CD8-positive, alpha-beta T cell (primary cell): ENCODE measurements at regions of chr10 and their contacts with region 1.

Region 1: DNA sequence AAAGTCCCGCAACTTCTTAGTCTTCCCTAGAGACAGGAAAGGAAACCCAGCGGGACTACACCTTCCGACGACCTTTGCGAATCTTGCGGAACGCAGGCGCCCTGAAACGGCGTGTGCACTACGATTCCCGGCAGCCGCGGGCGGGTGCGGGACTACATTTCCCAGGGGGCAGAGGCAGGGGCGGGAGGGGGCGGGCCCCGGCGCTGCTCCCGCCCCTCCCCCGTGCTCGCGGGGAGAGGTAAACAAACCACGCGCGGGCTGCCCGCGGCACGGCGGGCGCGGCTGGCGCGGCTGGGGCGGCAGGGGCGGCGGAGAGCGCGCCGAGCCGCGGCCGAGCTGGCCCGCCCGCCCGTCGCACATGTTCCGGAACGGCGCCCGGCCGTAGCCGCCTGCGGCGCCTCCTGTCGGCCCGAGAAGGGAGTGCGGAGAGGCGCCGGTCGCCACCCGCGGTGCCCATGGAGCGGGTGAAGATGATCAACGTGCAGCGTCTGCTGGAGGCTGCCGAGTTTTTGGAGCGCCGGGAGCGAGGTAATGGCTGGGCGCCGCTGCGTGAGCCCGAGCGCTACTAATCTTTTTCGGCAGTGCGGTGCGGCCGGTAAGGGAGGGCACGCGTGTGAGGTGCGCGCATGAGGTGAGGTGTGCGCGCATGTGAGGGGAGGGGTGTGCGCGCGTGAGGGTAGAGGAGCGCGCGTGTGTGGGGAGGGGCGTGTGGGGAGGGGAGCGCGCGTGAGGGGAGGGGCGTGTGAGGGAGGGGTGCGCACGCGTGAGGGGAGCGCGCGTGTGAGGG is 18.5 kb downstream of the MXI1 start:
- DNase-seq: peak; percentile 79 to 95 (median 88)
- ATAC-seq: peak; percentile 54
- H3K4me3 ChIP-seq: peak overlapping the region; percentile 88 to 91
- H3K4me3 Mint-ChIP-seq: peak overlapping the region; percentile 95
- H3K27ac ChIP-seq: peak overlapping the region; percentile 78 to 79
- H3K27ac Mint-ChIP-seq: peak overlapping the region; percentile 94
- H3K4me1 ChIP-seq: peaks cover 22% of the 10 kb centered on the region
- H3K4me1 Mint-ChIP-seq: peaks cover 34% of the 10 kb centered on the region
- H3K27me3 ChIP-seq: peaks cover 0 to 2% of the 10 kb centered on the region in 2 experiments
- H3K27me3 Mint-ChIP-seq: peaks cover 9% of the 10 kb centered on the region
- CTCF ChIP-seq: peak; percentile 50

Region 2: DNA sequence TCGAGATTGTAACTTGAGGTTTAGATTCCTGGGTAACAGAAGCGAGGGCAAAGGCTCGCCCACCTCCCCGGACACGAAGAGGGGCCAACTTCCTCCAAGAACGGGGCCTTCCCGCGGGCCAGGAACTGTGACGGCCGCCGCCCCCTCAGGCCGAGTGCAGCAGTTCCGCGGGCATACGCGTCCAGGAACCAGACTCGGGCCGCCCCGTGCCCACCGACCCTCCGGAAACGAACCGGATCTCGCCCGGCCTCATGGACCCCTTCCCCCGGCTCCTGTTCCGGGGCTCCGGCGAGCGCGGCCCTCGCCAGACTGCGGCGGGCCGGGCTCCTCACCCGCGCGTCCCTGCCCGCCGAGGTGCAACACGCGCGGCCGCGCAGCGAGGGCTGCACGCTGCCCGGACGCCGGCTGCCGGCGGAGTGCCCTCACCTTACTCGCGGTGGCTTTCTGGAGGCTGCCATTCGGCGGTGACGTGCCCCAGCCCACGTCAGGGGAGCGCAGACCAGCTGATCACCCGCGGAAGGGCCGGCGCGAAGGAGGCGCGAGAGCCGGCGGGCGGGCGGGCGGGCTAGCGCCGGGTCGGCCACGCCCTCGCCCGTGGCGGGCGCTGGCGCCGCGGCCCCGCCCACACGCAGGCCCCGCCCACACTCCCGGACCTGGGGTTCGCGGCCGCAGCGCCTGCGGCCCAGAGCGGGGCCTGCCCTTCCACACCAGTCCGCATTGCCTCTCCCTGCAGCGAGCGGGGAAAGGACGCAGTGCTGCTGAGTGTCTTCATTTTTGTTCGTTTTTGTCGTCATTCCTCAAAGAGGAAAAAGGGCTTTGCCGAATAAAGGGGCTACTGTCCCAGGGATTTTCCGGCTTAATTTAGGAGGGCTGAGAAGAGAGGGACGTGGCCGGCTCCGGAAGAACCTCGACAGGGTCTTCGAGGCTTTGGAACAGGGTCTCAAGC is 302.7 kb before region 1 on chr10 and contains the start of gene XPNPEP1:
- CTCF ChIA-PET with region 1: no interaction called
- POLR2A ChIA-PET with region 1: no interaction called
- intact Hi-C with region 1: loop called in 1 of 2 experiments (anchors 5 kb)
- DNase-seq: peak; percentile 55 to 93 (median 78)
- ATAC-seq: peak; percentile 90
- H3K4me3 ChIP-seq: peak within 1 kb of the TSS; percentile 75 to 80
- H3K4me3 Mint-ChIP-seq: peak within 1 kb of the TSS; percentile 87
- H3K27ac ChIP-seq: peak within 1 kb of the TSS; percentile 76 to 91
- H3K27ac Mint-ChIP-seq: peak within 1 kb of the TSS; percentile 92
- H3K4me1 ChIP-seq: peaks cover 37% of the 10 kb centered on the region
- H3K4me1 Mint-ChIP-seq: peaks cover 52% of the 10 kb centered on the region
- H3K27me3 ChIP-seq: no peaks in the 10 kb centered on the region
- H3K27me3 Mint-ChIP-seq: no peaks in the 10 kb centered on the region
- CTCF ChIP-seq: no peak
- total RNA-seq, gene XPNPEP1: 50.4 to 54.7 TPM

Region 3: GRCh38 chr10:110158051-110159005 is 67.6 kb before region 1 on chr10:
- CTCF ChIA-PET with region 1: interaction called, 5 read pairs
- POLR2A ChIA-PET with region 1: no interaction called
- intact Hi-C with region 1: loop called in 1 of 2 experiments (anchors 5 kb)
- DNase-seq: peak in 1 of 9 experiments; percentile 43
- ATAC-seq: no peak
- H3K4me3 ChIP-seq: no peak overlapping the region
- H3K4me3 Mint-ChIP-seq: no peak overlapping the region
- H3K27ac ChIP-seq: no peak overlapping the region
- H3K27ac Mint-ChIP-seq: no peak overlapping the region
- H3K4me1 ChIP-seq: peaks cover 24% of the 10 kb centered on the region
- H3K4me1 Mint-ChIP-seq: peaks cover 27% of the 10 kb centered on the region
- H3K27me3 ChIP-seq: peaks cover 43 to 59% of the 10 kb centered on the region in 2 experiments
- H3K27me3 Mint-ChIP-seq: peaks cover 79% of the 10 kb centered on the region
- CTCF ChIP-seq: no peak

Region 4: DNA sequence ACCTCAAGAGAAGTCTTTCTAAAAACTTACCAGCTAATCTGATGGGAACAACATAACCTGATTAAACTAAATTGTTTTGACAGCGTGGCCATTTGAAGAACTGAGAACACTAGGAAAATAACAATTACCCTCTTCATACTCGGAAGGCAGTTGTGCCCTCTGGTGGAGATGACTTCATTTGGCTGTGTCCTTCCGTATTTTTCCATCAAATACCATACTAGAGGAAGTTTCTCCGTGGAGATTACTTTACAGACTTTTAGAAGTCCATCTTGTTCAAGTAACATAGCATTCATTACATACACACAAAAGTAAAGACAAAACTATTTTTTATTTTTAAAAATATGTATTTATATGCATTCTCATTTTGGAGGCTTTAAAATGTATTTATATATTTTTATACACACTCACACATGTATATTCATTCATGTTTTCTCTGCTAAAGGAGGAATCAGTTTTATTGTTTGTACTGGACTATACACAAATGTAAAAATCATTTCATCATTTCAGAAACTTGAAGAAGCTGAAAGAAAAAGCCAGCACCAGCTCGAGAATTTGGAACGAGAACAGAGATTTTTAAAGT is 53.5 kb after region 1 on chr10:
- CTCF ChIA-PET with region 1: interaction called, 3 read pairs
- POLR2A ChIA-PET with region 1: no interaction called
- intact Hi-C with region 1: loop called (anchors 2 kb)
- DNase-seq: peak in 8 of 9 experiments; percentile 6 to 76 (median 44)
- ATAC-seq: peak; percentile 81
- H3K4me3 ChIP-seq: no peak overlapping the region
- H3K4me3 Mint-ChIP-seq: no peak overlapping the region
- H3K27ac ChIP-seq: no peak overlapping the region
- H3K27ac Mint-ChIP-seq: no peak overlapping the region
- H3K4me1 ChIP-seq: peaks cover under 1% of the 10 kb centered on the region
- H3K4me1 Mint-ChIP-seq: peaks cover 15% of the 10 kb centered on the region
- H3K27me3 ChIP-seq: no peaks in the 10 kb centered on the region
- H3K27me3 Mint-ChIP-seq: no peaks in the 10 kb centered on the region
- CTCF ChIP-seq: peak; percentile 77

Region 5: DNA sequence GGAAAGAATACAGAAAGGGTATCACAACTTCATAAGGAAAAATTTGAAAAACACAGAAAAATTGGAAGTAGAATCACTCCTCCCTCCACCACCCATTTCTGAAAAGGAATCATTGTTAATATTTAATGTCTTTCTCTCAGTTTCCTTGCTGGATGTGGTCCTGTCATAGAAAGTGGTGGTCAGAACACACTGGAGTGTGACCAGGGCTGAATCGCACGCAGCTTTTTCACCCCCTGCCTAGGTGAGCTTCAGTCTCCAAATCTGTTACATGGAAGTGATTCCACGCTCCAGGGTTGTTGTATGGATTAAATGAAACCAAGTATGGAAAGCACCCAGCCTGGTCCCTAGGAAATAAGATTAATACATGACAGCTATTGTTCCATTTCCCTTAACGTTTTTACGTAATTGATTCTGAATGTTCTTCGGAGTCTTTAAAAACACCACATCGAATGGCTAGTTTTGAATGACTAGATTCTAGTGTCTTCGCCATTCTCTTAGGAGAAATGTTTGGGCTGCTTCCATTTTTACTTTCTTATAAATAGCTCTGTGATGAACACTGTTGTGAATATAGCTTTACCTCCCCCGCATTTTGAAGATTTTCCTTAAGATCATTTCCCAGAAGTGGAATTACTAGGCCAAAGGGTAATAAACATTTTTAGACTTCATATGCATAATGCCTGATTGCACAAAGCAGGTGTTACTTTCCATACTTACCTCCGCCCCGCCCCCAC is 260.9 kb after region 1 on chr10:
- CTCF ChIA-PET with region 1: no interaction called
- POLR2A ChIA-PET with region 1: no interaction called
- intact Hi-C with region 1: no loop called
- DNase-seq: no peak
- ATAC-seq: no peak
- H3K4me3 ChIP-seq: no peak overlapping the region
- H3K4me3 Mint-ChIP-seq: no peak overlapping the region
- H3K27ac ChIP-seq: no peak overlapping the region
- H3K27ac Mint-ChIP-seq: no peak overlapping the region
- H3K4me1 ChIP-seq: no peaks in the 10 kb centered on the region
- H3K4me1 Mint-ChIP-seq: peaks cover 5% of the 10 kb centered on the region
- H3K27me3 ChIP-seq: no peaks in the 10 kb centered on the region
- H3K27me3 Mint-ChIP-seq: peaks cover 17% of the 10 kb centered on the region
- CTCF ChIP-seq: no peak

Region 6: DNA sequence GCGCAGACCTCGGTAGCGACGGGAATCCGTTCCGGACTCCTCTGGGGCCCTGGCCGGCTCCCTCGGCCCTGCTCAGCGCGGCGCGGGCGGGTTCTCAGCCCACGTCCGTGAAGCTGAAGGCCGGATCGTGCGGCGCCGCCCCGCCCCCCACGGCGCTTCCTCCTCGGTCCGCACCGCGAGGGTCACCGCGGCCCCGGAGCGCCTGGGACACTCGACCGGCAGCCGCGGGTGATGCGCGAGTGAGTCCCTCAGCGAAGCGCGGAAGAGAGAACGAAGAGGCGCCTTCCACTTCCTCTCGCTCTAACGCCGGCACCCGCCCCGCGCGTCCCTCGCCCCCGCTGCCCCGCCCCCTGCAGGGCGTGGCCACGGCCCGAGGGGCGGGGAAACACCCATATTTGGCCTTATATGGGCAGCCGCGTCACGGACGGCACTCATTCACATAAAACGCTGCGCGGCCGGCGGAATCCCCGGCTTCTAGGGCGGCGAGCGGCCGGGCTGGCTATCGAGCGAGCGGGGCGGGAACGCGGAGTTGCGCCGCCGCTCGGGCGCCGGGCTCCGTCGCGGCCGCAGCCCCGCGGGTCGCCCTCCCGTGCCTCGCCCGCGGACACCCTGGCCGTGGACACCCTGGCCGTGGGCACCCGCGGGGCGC is 271.6 kb after region 1 on chr10 and contains the start of gene DUSP5:
- CTCF ChIA-PET with region 1: no interaction called
- POLR2A ChIA-PET with region 1: no interaction called
- intact Hi-C with region 1: loop called in 1 of 2 experiments (anchors 5 kb)
- DNase-seq: peak; percentile 89 to 98 (median 94)
- ATAC-seq: peak; percentile 92
- H3K4me3 ChIP-seq: peak within 1 kb of the TSS; percentile 67 to 91
- H3K4me3 Mint-ChIP-seq: peak within 1 kb of the TSS; percentile 91
- H3K27ac ChIP-seq: peak within 1 kb of the TSS; percentile 50 to 63
- H3K27ac Mint-ChIP-seq: peak within 1 kb of the TSS; percentile 91
- H3K4me1 ChIP-seq: peaks cover 41% of the 10 kb centered on the region
- H3K4me1 Mint-ChIP-seq: peaks cover 50% of the 10 kb centered on the region
- H3K27me3 ChIP-seq: no peaks in the 10 kb centered on the region
- H3K27me3 Mint-ChIP-seq: no peaks in the 10 kb centered on the region
- CTCF ChIP-seq: no peak
- total RNA-seq, gene DUSP5: 69.8 TPM

Region 7: DNA sequence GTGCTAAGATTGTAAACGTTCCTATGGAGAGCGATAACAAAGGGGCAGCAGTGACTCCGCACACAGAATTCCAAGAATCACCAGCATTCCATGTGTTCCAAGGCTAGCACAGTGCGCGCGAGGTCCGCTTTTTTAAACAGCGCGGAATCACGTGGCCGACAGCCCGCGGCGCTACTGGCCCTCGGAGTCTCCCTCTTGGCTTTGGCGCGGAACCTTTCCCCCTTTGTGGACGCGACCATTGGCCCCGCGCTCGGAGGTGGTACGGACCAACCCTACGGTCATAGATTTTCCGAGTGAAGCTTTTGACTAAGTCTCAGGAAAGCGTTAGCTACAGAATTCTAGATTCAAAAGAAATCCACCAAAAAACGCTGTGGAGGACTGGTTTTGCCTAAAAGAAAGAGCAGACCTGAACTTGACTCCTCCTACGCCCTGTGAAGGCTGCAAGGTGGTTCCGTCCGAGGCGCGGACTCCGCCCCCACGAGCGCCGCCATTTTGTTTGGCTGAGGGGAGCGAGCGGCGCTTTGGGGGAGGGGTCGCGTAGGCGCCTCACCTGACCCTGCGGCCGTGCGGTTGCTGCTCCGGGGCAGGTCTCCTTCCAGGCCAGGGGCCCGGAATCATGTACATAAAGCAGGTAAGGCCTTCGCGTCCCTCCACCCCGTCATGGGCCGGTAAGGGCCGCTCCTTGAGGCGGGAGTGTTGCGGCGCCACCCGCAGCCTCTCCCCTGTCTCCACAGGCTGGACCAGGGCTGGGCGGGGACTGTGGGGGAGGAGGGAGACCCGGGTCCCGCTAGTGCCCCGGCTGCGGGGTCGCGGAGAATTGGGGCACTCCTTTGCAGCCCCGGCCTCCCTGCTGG is 341.5 kb after region 1 on chr10 and contains the start of gene SMC3:
- CTCF ChIA-PET with region 1: no interaction called
- POLR2A ChIA-PET with region 1: no interaction called
- intact Hi-C with region 1: loop called (anchors 5 kb)
- DNase-seq: peak; percentile 83 to 95 (median 90)
- ATAC-seq: peak; percentile 89
- H3K4me3 ChIP-seq: peak within 1 kb of the TSS; percentile 92 to 93
- H3K4me3 Mint-ChIP-seq: peak within 1 kb of the TSS; percentile 97
- H3K27ac ChIP-seq: peak within 1 kb of the TSS; percentile 85 to 86
- H3K27ac Mint-ChIP-seq: peak within 1 kb of the TSS; percentile 96
- H3K4me1 ChIP-seq: peaks cover 44% of the 10 kb centered on the region
- H3K4me1 Mint-ChIP-seq: peaks cover 44% of the 10 kb centered on the region
- H3K27me3 ChIP-seq: no peaks in the 10 kb centered on the region
- H3K27me3 Mint-ChIP-seq: peaks cover 12% of the 10 kb centered on the region
- CTCF ChIP-seq: no peak
- total RNA-seq, gene SMC3: 35.1 to 37.9 TPM

Region 8: DNA sequence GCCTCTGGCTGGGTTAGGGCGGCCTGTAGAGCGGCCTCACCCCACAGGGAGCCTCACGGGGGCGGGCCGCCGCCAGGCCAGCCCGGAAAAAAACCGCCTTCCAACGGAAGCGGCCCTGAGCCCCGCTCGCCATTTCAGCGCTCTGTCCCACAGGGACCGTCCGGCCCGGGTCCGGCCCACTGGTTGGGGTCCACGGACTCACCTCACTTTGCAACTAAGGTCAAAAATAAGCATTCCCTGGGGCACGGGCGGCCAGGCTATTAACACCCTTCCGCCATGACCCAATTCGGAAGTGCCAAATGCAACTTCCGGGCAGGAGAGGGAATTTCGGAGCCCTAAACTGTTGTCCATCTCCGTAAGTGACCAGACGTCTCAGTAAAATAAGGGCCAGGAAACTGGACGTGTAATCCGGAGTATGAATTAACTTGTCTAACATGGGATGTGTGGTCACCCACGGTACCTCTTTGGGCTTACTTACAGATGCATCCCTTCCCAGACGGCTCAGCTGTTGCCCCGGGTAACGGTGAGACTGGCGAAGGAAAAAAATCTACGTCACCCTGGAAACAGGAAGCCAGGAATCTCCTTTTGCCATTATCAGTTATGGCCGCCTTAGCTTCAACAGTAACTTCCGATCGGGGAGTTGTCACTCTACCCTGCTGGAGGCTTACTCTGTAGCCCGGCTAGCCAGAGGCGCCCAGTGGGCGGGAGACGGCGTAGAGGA is 692.9 kb after region 1 on chr10 and contains the start of gene BBIP1:
- CTCF ChIA-PET with region 1: no interaction called
- POLR2A ChIA-PET with region 1: no interaction called
- intact Hi-C with region 1: loop called in 1 of 2 experiments (anchors 10 kb)
- DNase-seq: peak in 5 of 9 experiments; percentile 95 to 100 (median 95)
- ATAC-seq: peak; percentile 93
- H3K4me3 ChIP-seq: peak within 1 kb of the TSS; percentile 92 to 100
- H3K4me3 Mint-ChIP-seq: peak within 1 kb of the TSS; percentile 98
- H3K27ac ChIP-seq: peak within 1 kb of the TSS; percentile 99 to 100
- H3K27ac Mint-ChIP-seq: peak within 1 kb of the TSS; percentile 99
- H3K4me1 ChIP-seq: peaks cover 16% of the 10 kb centered on the region
- H3K4me1 Mint-ChIP-seq: peaks cover 51% of the 10 kb centered on the region
- H3K27me3 ChIP-seq: no peaks in the 10 kb centered on the region
- H3K27me3 Mint-ChIP-seq: no peaks in the 10 kb centered on the region
- CTCF ChIP-seq: no peak
- total RNA-seq, gene BBIP1: 9.5 to 11.1 TPM